PC-9 (cell line): ENCODE measurements at regions of chr3 and their contacts with region 1.

Region 1: DNA sequence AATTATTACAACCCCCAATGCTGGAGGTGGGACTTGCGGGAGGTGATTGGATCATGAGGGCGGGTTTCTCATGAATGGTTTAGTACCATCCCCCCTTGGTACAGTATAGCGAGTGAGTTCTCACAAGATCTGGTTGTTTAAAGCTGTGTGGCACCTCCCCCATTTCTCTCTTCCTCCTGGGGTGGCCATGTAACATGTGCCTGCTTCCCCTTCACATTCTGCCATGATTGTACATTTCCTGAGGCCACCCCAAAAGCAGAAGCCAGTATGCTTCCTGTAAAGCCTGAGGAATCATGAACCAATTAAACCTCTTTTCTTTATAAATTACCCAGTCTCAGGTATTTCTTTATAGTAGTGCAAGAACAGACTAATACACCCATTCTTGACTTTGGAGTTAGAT is 20.3 kb upstream of the PROK2 start:
- DNase-seq: no peak
- H3K4me3 ChIP-seq: no peak overlapping the region
- H3K27ac ChIP-seq: no peak overlapping the region
- H3K4me1 ChIP-seq: no peaks in the 10 kb centered on the region
- H3K27me3 ChIP-seq: peaks cover 3% of the 10 kb centered on the region; the same call in 1 of the 2 replicates
- CTCF ChIP-seq: no peak

Region 2: GRCh38 chr3:72368331-72368975 is 563.3 kb after region 1 on chr3:
- CTCF ChIA-PET with region 1: no interaction called
- POLR2A ChIA-PET with region 1: no interaction called
- intact Hi-C with region 1: no loop called
- DNase-seq: no peak
- H3K4me3 ChIP-seq: no peak overlapping the region
- H3K27ac ChIP-seq: no peak overlapping the region
- H3K4me1 ChIP-seq: no peaks in the 10 kb centered on the region
- H3K27me3 ChIP-seq: no peaks in the 10 kb centered on the region
- CTCF ChIP-seq: no peak

Region 3: GRCh38 chr3:73049319-73049718 is 1244.1 kb after region 1 on chr3:
- CTCF ChIA-PET with region 1: no interaction called
- POLR2A ChIA-PET with region 1: interaction called, 10 read pairs
- intact Hi-C with region 1: no loop called
- DNase-seq: no peak
- H3K4me3 ChIP-seq: no peak overlapping the region
- H3K27ac ChIP-seq: no peak overlapping the region
- H3K4me1 ChIP-seq: no peaks in the 10 kb centered on the region
- H3K27me3 ChIP-seq: no peaks in the 10 kb centered on the region
- CTCF ChIP-seq: no peak